ENCODE measurements at regions of chr11 and their contacts with region 1.

Region 1: GRCh38 chr11:75142714-75143419 is 8.0 kb upstream of the SLCO2B1 start:
- DNase-seq: peak; percentile 88
- H3K4me3 Mint-ChIP-seq: peak overlapping the region; percentile 27
- H3K27ac Mint-ChIP-seq: peak overlapping the region; percentile 92
- H3K4me1 Mint-ChIP-seq: peaks cover 46% of the 10 kb centered on the region
- H3K27me3 Mint-ChIP-seq: peaks cover 18% of the 10 kb centered on the region

Region 2: DNA sequence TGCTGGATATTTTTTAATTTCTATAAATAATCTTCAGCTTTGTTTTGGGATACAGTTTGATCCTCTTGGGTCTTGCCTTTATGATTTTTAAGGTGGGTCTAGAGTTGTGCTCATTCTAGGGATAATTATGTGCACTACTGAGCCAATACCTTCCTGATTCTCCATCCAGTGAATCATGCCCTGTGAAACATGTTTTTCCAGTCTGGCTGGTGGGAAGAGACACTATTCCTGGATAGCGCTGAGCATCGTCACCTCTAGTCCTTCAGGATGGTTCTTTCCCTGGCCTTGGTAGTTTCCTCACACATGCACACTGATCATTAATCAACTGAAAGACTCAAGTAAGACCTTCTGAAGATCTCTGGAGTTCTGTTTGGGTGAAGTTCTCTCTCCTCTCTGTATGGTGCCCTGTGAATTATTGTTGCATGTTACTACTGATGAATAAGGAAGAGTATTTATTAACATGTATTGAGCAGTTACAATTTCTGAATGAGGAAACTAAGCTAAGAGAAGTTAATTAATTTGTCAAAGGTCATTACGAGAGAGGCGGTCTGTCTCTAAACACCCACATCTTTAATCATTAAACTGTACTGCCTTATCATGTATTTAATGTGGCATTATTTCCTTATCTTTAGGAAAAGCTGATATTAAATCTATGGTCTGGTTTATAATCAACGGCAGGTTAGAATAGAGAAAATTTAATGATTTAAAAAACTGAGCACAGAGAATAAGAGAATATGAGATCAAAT is 610.2 kb before region 1 on chr11:
- CTCF ChIA-PET with region 1: no interaction called
- DNase-seq: no peak
- H3K4me3 Mint-ChIP-seq: no peak overlapping the region
- H3K27ac Mint-ChIP-seq: no peak overlapping the region
- H3K4me1 Mint-ChIP-seq: no peaks in the 10 kb centered on the region
- H3K27me3 Mint-ChIP-seq: no peaks in the 10 kb centered on the region

Region 3: GRCh38 chr11:74849525-74850391 is 293.1 kb before region 1 on chr11:
- CTCF ChIA-PET with region 1: no interaction called
- DNase-seq: no peak
- H3K4me3 Mint-ChIP-seq: no peak overlapping the region
- H3K27ac Mint-ChIP-seq: no peak overlapping the region
- H3K4me1 Mint-ChIP-seq: peaks cover 8% of the 10 kb centered on the region
- H3K27me3 Mint-ChIP-seq: no peaks in the 10 kb centered on the region

Region 4: DNA sequence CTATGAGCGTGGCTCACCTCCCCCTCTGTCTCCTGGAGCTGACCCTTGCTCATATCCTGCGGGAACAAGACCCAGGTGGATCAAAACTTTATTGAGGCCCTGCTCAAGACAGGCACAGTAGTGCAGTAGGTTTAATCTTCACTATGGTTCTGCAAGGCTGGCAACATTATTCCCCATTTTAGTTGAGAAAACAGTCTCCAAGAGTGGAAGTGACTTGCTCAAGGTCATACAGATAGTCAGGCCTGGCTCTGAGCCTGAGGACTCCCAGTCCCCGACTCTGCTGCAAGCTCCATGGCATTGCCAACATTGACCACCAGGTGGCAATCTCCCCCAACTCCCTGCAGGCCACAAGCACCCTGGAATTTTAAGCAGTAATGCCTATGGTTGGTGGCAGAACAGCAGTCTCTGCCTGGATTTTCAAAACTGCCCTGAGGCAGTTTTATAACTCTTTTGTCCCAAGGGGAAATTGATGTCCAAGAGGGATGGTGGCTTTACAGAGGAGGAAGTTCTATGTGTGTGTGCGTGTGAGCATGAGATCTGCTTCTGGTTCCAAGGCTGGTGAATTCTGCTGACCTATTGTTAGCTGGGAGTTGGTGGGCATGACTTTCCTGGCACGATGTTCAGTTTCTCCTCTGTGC is 120.0 kb before region 1 on chr11:
- CTCF ChIA-PET with region 1: interaction called, 27 read pairs
- DNase-seq: peak; percentile 85
- H3K4me3 Mint-ChIP-seq: no peak overlapping the region
- H3K27ac Mint-ChIP-seq: no peak overlapping the region
- H3K4me1 Mint-ChIP-seq: no peaks in the 10 kb centered on the region
- H3K27me3 Mint-ChIP-seq: no peaks in the 10 kb centered on the region

Region 5: DNA sequence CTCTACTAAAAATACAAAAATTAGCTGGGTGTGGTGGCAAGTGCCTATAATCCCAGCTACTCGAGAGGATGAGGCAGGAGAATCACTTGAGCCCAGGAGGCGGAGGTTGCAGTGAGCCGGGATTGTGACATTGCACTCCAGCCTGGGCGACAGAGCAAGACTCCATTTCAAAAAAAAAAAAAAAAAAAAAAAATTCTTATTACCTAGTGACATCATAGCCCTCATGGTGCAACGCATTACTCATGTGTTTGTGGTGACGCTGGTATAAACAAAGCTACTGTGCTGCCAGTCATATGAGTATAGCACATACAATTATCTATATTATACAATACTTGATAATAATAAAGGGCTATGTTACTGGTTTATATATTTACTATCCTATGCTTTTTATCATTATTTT is 87.4 kb before region 1 on chr11:
- CTCF ChIA-PET with region 1: no interaction called
- DNase-seq: no peak
- H3K4me3 Mint-ChIP-seq: no peak overlapping the region
- H3K27ac Mint-ChIP-seq: no peak overlapping the region
- H3K4me1 Mint-ChIP-seq: no peaks in the 10 kb centered on the region
- H3K27me3 Mint-ChIP-seq: peaks cover 26% of the 10 kb centered on the region

Region 6: DNA sequence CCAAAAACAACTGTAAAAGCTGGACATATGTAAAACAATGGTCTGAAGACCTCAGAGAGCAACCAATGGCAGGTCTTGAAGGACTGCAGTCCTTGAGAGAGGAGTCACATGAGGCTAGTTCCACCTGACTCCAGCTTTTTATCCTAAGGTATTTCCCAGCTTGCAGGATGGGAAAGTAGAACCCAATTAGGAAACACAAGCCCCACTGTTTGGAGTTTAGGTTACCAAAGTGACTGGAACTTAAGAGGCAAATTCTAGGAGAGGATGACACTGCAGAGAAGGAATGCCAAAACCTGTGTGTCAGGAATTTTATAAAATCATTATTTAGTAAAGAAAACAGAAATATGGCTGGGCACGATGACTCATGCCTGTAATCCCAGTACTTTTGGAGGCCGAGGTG is 64.6 kb before region 1 on chr11:
- CTCF ChIA-PET with region 1: no interaction called
- DNase-seq: no peak
- H3K4me3 Mint-ChIP-seq: no peak overlapping the region
- H3K27ac Mint-ChIP-seq: no peak overlapping the region
- H3K4me1 Mint-ChIP-seq: no peaks in the 10 kb centered on the region
- H3K27me3 Mint-ChIP-seq: peaks cover 39% of the 10 kb centered on the region

Region 7: DNA sequence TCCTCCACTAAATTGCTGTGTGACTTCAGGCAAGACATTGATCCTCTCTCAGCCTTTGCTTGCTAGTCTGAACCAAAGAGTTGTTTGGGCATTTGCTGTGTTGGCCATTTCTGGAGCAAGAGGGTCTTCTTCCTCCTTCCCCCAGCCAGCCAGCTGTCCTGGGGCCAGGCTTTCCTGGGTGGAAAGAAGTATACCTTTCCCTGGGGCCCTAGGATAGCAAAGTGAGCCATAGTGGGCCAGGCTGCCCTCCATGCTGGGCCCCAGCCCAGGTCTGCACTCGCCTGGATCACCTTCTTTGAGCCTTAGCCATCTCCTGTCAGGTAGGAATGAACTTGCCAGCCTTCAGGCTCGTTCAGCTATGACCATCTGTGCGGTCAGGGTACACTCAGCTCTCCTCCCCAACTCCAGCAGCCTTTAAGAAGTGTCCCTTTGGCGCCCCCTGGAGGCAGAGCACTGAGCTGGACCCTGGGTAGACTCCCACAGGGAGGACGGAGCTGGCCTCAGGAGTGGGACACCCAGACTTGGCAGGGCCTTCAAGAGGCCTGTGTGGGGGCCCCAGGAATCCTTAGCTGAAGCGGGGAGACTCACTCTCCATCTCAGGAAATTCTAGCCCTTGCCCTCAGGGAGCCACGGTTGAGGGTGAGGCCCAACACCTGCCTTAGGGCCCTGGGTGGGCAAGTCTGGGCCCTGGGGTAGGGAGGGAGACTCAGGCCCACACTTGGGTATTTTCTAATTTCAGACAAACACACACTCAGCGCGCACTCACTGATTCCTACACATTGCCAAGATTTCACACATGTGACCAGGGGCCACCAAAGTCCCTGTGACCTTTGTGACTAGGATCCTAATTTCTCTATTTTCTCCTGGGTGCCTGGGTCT is 62.1 kb after region 1 on chr11:
- CTCF ChIA-PET with region 1: interaction called, 524 read pairs
- DNase-seq: peak; percentile 91
- H3K4me3 Mint-ChIP-seq: no peak overlapping the region
- H3K27ac Mint-ChIP-seq: no peak overlapping the region
- H3K4me1 Mint-ChIP-seq: no peaks in the 10 kb centered on the region
- H3K27me3 Mint-ChIP-seq: peaks cover 13% of the 10 kb centered on the region

Region 8: GRCh38 chr11:75241036-75241905 is 98.4 kb after region 1 on chr11:
- CTCF ChIA-PET with region 1: interaction called, 273 read pairs
- DNase-seq: peak; percentile 87
- H3K4me3 Mint-ChIP-seq: peak overlapping the region; percentile 62
- H3K27ac Mint-ChIP-seq: no peak overlapping the region
- H3K4me1 Mint-ChIP-seq: peaks cover 13% of the 10 kb centered on the region
- H3K27me3 Mint-ChIP-seq: peaks cover 90% of the 10 kb centered on the region

Region 9: GRCh38 chr11:75270896-75271418 is 128.1 kb after region 1 on chr11:
- CTCF ChIA-PET with region 1: interaction called, 29 read pairs
- DNase-seq: peak; percentile 62
- H3K4me3 Mint-ChIP-seq: no peak overlapping the region
- H3K27ac Mint-ChIP-seq: peak overlapping the region; percentile 17
- H3K4me1 Mint-ChIP-seq: peaks cover 36% of the 10 kb centered on the region
- H3K27me3 Mint-ChIP-seq: no peaks in the 10 kb centered on the region